Astrocyte of the cerebellum (primary cell): ENCODE measurements at regions of chr2 and their contacts with region 1.

Region 1: DNA sequence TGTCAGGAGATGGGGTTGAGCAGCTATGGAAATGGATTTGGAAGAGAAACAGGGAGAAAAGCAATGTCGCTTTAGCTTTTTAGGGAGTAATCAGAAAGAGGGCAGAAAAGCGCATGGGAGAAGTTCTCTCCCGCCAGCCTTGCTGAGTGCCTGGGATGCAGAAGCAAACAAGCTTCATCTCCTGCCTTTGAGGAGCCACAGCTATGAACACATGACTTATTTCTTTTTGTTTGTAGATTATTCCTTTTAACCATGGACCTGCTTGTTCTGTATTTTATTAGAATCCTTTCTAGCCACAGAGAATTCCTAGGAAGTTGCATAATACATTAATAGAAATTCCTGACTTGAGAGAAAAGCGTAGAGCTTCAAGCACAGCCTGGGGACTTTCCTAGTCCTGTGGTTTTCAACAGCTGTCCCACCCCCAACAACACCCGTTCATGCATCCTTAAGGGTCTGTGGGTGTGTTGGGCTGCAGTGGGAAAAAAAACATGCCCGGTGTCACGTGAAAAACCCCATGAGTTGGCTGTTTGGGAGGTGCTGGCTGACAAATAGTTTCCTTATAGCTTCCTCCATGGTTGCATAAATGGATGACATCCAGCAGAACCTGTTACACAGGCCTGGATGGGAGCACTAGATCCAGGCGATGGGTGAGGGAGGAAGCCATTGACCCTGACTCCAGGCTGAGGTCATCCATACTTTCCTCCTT is 14.9 kb downstream of the SLC9A4 start:
- DNase-seq: peak; percentile 44
- H3K4me3 ChIP-seq: no peak overlapping the region
- CTCF ChIP-seq: no peak

Region 2: DNA sequence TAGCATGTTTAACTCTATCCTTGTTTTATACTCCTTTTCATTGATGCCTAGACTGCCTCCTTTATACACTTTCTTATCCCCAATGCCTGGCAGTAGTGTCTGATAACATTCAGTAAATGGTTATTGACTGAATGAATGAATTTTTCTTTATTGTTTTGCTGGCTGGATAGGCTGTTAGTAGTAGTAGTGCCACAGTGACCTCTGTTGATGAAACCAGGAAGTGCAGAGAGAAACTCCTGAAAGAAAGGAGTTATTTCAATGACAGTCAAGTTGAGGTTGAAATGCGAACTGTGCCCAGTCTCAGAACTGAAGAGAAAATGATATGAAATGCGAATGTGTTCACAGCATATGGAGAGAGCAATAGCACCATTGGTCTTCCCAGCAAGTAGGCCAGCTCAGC is 104.7 kb after region 1 on chr2:
- in situ Hi-C with region 1: loop called (anchors 25 kb)
- DNase-seq: no peak
- H3K4me3 ChIP-seq: no peak overlapping the region
- CTCF ChIP-seq: peak; percentile 53